GM12878 (cell line): ENCODE measurements at regions of chr11 and their contacts with region 1.

Region 1: GRCh38 chr11:44775366-44775984 is 48.7 kb downstream of the TSPAN18 start:
- DNase-seq: no peak
- ATAC-seq: peak; percentile 94
- H3K4me3 ChIP-seq: no peak overlapping the region
- H3K27ac ChIP-seq: no peak overlapping the region
- H3K4me1 ChIP-seq: no peaks in the 10 kb centered on the region
- H3K27me3 ChIP-seq: peaks cover 0 to 1% of the 10 kb centered on the region in 2 experiments; a peak in 1 of 4 replicates
- CTCF ChIP-seq: peak; percentile 70 to 84 (median 77)
- EP300 ChIP-seq: no peak
- POLR2A ChIP-seq: no peak
- RAD21 ChIP-seq: peak; percentile 52

Region 2: GRCh38 chr11:44524751-44525201 is 250.7 kb before region 1 on chr11:
- CTCF ChIA-PET with region 1: interaction called, 10 read pairs
- POLR2A ChIA-PET with region 1: no interaction called
- RAD21 ChIA-PET with region 1: no interaction called
- SMC1A ChIA-PET with region 1: no interaction called
- in situ Hi-C with region 1: no loop called
- intact Hi-C with region 1: no loop called
- DNase-seq: no peak
- ATAC-seq: no peak
- H3K4me3 ChIP-seq: no peak overlapping the region
- H3K27ac ChIP-seq: no peak overlapping the region
- H3K4me1 ChIP-seq: no peaks in the 10 kb centered on the region
- H3K27me3 ChIP-seq: peaks cover under 1 to 2% of the 10 kb centered on the region in 2 experiments; a peak in 1 of 4 replicates
- CTCF ChIP-seq: no peak
- EP300 ChIP-seq: no peak
- POLR2A ChIP-seq: no peak
- RAD21 ChIP-seq: no peak

Region 3: DNA sequence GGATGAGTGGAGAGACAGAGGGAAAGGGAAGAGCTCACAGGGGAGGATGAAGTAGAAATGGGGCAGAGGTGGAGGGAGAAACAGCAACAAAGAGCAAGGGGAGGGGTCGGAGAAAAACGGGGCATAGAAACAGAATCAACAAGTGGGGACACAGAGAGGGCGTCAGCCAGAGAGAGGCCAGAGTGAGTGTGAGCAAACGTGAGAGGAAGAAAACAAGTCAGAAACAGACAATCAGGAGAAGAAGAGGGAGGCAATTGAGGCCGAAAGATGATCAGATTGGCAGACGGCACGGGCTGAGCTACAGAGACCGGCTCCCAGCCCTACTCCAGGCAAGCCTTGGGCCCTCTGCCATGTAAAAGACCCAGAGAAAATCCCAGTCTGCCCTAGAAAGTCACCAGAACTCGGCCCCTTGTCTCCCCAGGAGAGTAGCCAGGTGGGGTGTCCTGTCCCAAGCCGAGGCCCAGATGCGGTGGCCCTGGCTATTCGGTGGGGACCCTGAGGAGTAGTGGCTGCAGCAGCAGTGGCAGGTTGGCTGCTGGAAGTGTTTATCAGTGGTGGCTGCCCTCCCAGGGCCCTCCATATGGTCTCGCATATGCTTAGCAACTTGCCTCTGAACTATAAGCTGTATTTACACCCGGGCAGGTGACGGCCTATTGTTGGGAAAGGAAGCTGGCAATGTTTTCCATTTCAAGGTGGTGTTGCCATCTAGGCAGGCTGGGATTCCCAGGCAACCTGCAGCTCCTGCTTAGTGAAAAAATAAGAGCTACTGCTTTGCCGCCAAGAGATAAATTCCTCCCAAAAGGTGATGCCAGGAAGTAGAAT is 63.5 kb before region 1 on chr11:
- CTCF ChIA-PET with region 1: no interaction called
- POLR2A ChIA-PET with region 1: no interaction called
- RAD21 ChIA-PET with region 1: no interaction called
- SMC1A ChIA-PET with region 1: no interaction called
- in situ Hi-C with region 1: no loop called
- intact Hi-C with region 1: no loop called
- DNase-seq: no peak
- ATAC-seq: no peak
- H3K4me3 ChIP-seq: no peak overlapping the region
- H3K27ac ChIP-seq: no peak overlapping the region
- H3K4me1 ChIP-seq: no peaks in the 10 kb centered on the region
- H3K27me3 ChIP-seq: 0 out of 4 replicates have a peak, but pooled peaks cover 0 to 1% of the 10 kb centered on the region in 2 experiments
- CTCF ChIP-seq: no peak
- EP300 ChIP-seq: no peak
- POLR2A ChIP-seq: no peak
- RAD21 ChIP-seq: no peak

Region 4: DNA sequence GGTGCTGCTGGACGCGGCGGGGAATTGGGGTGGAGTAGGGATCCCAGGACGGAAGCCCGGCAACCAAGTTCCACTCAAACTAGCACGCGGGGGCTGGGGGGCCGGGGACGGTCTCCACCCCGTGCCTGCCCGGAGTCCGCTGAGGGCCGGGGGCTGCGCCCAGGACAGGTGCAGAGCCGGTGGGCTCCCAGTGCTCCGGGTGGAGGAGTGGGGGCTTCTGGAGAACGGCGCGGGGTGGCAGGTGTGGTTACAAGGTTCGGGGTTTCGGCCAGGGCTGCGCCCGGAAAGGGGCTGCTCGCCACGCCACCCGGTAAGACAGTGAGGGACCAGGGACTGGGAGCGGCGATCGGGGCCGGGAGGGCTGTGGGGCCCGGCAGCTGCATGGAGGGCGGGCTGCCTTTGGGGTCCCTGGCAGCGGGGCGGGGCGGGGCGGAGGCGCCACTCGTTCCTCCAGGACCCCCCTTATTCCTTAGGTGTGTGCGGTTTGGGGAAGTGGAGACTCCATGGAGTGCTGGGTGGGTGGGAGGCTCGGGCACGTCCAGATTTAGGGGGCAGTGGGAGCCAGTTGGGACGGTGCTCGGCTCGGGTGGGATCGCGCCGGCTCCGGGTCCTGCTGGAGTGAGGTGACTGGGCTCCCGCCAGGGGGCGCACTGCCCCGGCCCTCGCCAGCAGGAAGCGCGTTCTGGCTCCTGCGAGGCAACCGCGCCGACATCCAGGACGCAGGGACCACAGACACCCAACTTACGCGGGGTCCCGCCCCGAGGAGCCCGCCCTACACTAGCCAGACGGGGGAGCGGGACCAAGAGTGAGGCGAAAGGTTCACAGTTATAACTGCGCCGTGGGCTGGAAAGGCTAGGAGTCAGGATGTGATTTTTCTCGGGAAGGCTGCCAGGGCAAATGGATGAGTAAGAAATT is 47.8 kb before region 1 on chr11:
- CTCF ChIA-PET with region 1: interaction called, 5 read pairs
- POLR2A ChIA-PET with region 1: no interaction called
- RAD21 ChIA-PET with region 1: interaction called, 5 read pairs
- SMC1A ChIA-PET with region 1: interaction called, 3 read pairs
- in situ Hi-C with region 1: no loop called
- intact Hi-C with region 1: loop called (anchors 5 kb)
- DNase-seq: no peak
- ATAC-seq: peak; percentile 90
- H3K4me3 ChIP-seq: peak overlapping the region; percentile 86
- H3K27ac ChIP-seq: no peak overlapping the region
- H3K4me1 ChIP-seq: peaks cover 11% of the 10 kb centered on the region
- H3K27me3 ChIP-seq: peaks cover 0 to 3% of the 10 kb centered on the region in 2 experiments; a peak in 3 of 4 replicates
- CTCF ChIP-seq: peak; percentile 77 to 95 (median 85)
- EP300 ChIP-seq: no peak
- POLR2A ChIP-seq: no peak
- RAD21 ChIP-seq: peak; percentile 61

Region 5: DNA sequence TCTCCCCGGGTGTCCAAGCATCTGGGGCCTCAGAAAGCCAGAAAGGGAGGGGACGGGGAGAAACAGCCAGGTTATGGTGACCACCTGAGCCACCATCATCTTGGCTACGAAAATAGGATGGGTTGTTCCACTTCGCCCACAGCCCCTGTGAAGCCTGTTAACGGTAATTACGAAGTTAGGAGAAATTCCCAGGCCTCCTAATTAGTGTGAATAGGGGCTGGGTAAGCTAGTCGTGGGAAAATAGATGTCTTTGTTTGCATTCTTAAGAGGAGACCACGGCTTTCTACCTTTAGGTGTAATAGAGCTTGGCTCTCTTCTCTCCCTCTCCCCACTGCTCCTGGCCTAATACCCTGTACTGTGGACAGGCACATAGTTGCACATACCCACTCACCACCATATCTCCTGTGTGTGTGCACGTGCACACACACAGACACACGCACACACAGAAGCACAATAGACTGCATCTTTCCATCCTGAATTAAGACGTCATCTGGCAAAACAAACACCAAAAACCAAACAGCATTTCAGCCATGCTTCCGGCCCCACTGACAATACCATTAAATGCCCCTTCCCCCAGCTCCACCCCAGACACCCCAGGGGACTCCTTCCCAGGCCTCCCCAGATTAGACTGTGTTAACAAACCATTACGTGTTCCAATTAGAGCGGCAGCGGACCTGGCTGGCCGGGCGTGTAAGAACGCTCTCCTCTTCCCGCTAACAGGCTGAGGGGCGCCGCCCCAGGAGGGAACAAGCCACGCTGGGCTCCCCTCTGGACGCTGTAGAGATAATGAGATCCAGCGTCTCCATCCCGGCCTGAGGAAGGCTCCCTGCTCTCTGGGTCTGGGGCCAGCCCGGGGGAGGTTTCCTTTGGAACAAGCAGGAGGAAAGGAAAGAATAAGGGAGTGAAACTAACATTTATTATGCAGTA is 102.4 kb after region 1 on chr11:
- CTCF ChIA-PET with region 1: interaction called, 12 read pairs
- POLR2A ChIA-PET with region 1: no interaction called
- RAD21 ChIA-PET with region 1: no interaction called
- SMC1A ChIA-PET with region 1: interaction called, 5 read pairs
- in situ Hi-C with region 1: no loop called
- intact Hi-C with region 1: no loop called
- DNase-seq: no peak
- ATAC-seq: no peak
- H3K4me3 ChIP-seq: no peak overlapping the region
- H3K27ac ChIP-seq: no peak overlapping the region
- H3K4me1 ChIP-seq: no peaks in the 10 kb centered on the region
- H3K27me3 ChIP-seq: no peaks in the 10 kb centered on the region; a peak in 1 of 4 replicates
- CTCF ChIP-seq: no peak
- EP300 ChIP-seq: no peak
- POLR2A ChIP-seq: no peak
- RAD21 ChIP-seq: no peak

Region 6: GRCh38 chr11:44911029-44911814 is 135.7 kb after region 1 on chr11:
- CTCF ChIA-PET with region 1: interaction called, 9 read pairs
- POLR2A ChIA-PET with region 1: no interaction called
- RAD21 ChIA-PET with region 1: interaction called, 3 read pairs
- SMC1A ChIA-PET with region 1: interaction called, 10 read pairs
- in situ Hi-C with region 1: no loop called
- intact Hi-C with region 1: no loop called
- DNase-seq: no peak
- ATAC-seq: peak; percentile 95
- H3K4me3 ChIP-seq: no peak overlapping the region
- H3K27ac ChIP-seq: no peak overlapping the region
- H3K4me1 ChIP-seq: peaks cover 4% of the 10 kb centered on the region
- H3K27me3 ChIP-seq: no peaks in the 10 kb centered on the region; a peak in 1 of 4 replicates
- CTCF ChIP-seq: peak; percentile 68 to 77 (median 76)
- EP300 ChIP-seq: no peak
- POLR2A ChIP-seq: no peak
- RAD21 ChIP-seq: peak; percentile 83